ENCODE measurements at regions of chr10 and their contacts with region 1.

Region 1: DNA sequence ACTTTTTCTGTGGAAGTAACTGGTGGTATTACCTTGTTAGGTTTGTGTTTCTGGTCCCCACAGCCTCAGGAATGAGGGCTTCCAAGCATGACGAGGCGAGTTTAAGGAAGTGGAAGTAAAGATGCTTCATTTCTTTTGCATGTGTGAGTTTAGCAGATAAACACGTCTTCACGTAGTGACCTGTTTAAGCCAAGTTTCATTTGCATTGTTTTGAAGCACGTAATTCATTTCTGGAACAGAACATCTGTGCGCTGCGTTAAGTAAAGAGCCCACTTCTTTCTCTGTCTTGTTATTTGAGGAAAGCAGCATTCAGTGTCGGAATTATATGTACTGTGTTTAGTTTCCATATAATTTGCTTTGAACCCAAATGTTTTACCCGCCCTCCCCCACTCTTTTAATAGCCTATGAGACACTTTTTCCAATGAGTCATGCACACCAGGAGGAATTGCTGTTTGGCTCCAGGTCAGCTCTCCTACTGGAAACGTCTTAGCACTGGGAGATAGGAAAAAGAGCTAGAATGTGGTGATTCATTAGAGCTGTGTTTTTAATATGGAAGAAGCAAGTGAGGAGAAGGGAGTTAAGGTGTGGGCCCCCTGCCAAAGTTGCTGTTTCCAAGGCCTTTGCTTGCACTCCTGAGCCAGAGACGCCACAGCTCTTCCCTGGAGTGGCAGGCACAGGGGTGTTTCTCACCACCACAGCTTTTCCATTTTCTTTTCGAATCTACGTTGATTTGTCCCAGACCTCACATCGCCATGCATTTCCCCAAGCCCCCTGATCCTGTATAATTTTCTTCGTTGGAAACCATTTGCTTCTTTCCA is 36.8 kb downstream of the BTBD16 start:
- DNase-seq: peak; percentile 97
- ATAC-seq: peak; percentile 75
- H3K4me3 ChIP-seq: peak overlapping the region; percentile 29 to 45
- H3K27ac ChIP-seq: peak overlapping the region; percentile 95
- H3K4me1 ChIP-seq: peaks cover 28 to 46% of the 10 kb centered on the region in 2 experiments
- H3K27me3 ChIP-seq: no peaks in the 10 kb centered on the region
- CTCF ChIP-seq: no peak
- POLR2A ChIP-seq: no peak
- RAD21 ChIP-seq: peak; percentile 50

Region 2: DNA sequence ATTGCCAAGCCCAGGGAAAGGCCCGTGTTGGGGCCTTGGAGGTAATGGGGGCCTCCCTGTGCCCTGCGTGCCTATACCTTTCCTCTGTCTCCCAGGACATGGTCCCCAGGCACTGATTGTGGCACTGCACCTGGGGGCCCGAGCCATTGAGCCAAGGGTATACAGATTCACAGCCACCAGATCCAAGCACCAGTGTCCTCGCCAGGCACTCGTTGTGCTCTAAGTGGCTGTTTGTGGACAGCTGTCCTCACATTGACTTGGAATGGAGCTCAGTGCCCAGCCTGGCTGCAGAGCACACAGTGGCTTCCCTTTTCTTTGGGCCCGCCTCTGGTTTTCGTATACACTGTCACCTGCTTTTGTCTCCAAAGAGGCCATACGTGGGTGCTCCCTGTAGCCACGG is 108.8 kb before region 1 on chr10:
- CTCF ChIA-PET with region 1: no interaction called
- POLR2A ChIA-PET with region 1: no interaction called
- RAD21 ChIA-PET with region 1: no interaction called
- intact Hi-C with region 1: no loop called
- DNase-seq: no peak
- ATAC-seq: peak; percentile 22; the same call in 1 of the 2 replicates
- H3K4me3 ChIP-seq: no peak overlapping the region
- H3K27ac ChIP-seq: no peak overlapping the region; the same call in 1 of the 2 replicates
- H3K4me1 ChIP-seq: no peaks in the 10 kb centered on the region
- H3K27me3 ChIP-seq: no peaks in the 10 kb centered on the region
- CTCF ChIP-seq: no peak
- POLR2A ChIP-seq: no peak
- RAD21 ChIP-seq: no peak

Region 3: GRCh38 chr10:122374237-122374869 is 66.5 kb after region 1 on chr10 and contains the start of gene PLEKHA1:
- CTCF ChIA-PET with region 1: no interaction called
- POLR2A ChIA-PET with region 1: interaction called, 12 read pairs
- RAD21 ChIA-PET with region 1: no interaction called
- intact Hi-C with region 1: loop called (anchors 1 kb)
- DNase-seq: peak; percentile 88
- ATAC-seq: peak; percentile 94
- H3K4me3 ChIP-seq: peak within 1 kb of the TSS; percentile 74 to 75
- H3K27ac ChIP-seq: peak within 1 kb of the TSS; percentile 87
- H3K4me1 ChIP-seq: peaks cover 7 to 16% of the 10 kb centered on the region in 2 experiments
- H3K27me3 ChIP-seq: no peaks in the 10 kb centered on the region
- CTCF ChIP-seq: no peak
- POLR2A ChIP-seq: no peak
- RAD21 ChIP-seq: no peak
- total RNA-seq, gene PLEKHA1: 30.6 TPM

Region 4: GRCh38 chr10:122530177-122530576 is 222.3 kb after region 1 on chr10:
- CTCF ChIA-PET with region 1: no interaction called
- POLR2A ChIA-PET with region 1: no interaction called
- RAD21 ChIA-PET with region 1: no interaction called
- intact Hi-C with region 1: no loop called
- DNase-seq: no peak
- ATAC-seq: no peak
- H3K4me3 ChIP-seq: no peak overlapping the region
- H3K27ac ChIP-seq: no peak overlapping the region
- H3K4me1 ChIP-seq: peaks cover 0 to 8% of the 10 kb centered on the region in 2 experiments; a peak in 1 of 4 replicates
- H3K27me3 ChIP-seq: peaks cover 29% of the 10 kb centered on the region; the same call in 1 of the 2 replicates
- CTCF ChIP-seq: no peak
- POLR2A ChIP-seq: no peak
- RAD21 ChIP-seq: no peak